Mammary epithelial cell (primary cell): ENCODE measurements at regions of chr1 and their contacts with region 1.

Region 1: GRCh38 chr1:20386323-20387081 is 95.8 kb downstream of the VWA5B1 start:
- DNase-seq: no peak
- H3K4me3 ChIP-seq: no peak overlapping the region
- H3K27ac ChIP-seq: no peak overlapping the region
- H3K4me1 ChIP-seq: no peaks in the 10 kb centered on the region
- H3K27me3 ChIP-seq: peaks cover 4% of the 10 kb centered on the region
- CTCF ChIP-seq: no peak

Region 2: GRCh38 chr1:20367116-20367585 is 19.4 kb before region 1 on chr1:
- CTCF ChIA-PET with region 1: no interaction called
- dilution Hi-C with region 1: no loop called
- in situ Hi-C with region 1: no loop called
- intact Hi-C with region 1: no loop called
- DNase-seq: peak; percentile 48
- H3K4me3 ChIP-seq: peak overlapping the region in 2 of 3 experiments; percentile 1 to 15
- H3K27ac ChIP-seq: no peak overlapping the region
- H3K4me1 ChIP-seq: peaks cover 25% of the 10 kb centered on the region
- H3K27me3 ChIP-seq: peaks cover 7% of the 10 kb centered on the region
- CTCF ChIP-seq: peak; percentile 72 to 80

Region 3: DNA sequence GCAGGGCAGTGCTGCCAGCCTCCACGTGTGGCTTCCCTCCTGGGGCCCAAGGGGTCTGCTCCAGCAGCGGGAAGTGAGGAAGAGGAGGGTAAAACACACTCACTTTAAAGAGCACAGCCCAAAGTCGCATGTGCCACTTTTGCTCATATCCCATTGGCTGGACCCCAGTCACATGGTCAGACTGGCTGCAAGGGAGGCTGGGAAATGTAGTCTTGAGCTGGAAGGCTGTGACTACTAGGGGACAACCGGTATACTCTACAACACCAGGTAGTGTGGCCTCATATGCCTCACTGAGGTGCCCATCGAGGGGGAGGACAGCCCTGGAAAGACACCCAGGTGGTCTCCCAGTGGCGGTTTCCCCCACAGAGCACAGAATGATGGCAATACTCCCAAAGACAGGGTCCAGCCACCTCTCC is 54.3 kb after region 1 on chr1:
- CTCF ChIA-PET with region 1: no interaction called
- dilution Hi-C with region 1: loop called (anchors 5 kb)
- in situ Hi-C with region 1: no loop called
- intact Hi-C with region 1: no loop called
- DNase-seq: peak; percentile 24
- H3K4me3 ChIP-seq: no peak overlapping the region
- H3K27ac ChIP-seq: no peak overlapping the region
- H3K4me1 ChIP-seq: peaks cover 11% of the 10 kb centered on the region
- H3K27me3 ChIP-seq: no peaks in the 10 kb centered on the region
- CTCF ChIP-seq: no peak